CD8-positive, alpha-beta memory T cell (primary cell): ENCODE measurements at regions of chr2 and their contacts with region 1.

Region 1: DNA sequence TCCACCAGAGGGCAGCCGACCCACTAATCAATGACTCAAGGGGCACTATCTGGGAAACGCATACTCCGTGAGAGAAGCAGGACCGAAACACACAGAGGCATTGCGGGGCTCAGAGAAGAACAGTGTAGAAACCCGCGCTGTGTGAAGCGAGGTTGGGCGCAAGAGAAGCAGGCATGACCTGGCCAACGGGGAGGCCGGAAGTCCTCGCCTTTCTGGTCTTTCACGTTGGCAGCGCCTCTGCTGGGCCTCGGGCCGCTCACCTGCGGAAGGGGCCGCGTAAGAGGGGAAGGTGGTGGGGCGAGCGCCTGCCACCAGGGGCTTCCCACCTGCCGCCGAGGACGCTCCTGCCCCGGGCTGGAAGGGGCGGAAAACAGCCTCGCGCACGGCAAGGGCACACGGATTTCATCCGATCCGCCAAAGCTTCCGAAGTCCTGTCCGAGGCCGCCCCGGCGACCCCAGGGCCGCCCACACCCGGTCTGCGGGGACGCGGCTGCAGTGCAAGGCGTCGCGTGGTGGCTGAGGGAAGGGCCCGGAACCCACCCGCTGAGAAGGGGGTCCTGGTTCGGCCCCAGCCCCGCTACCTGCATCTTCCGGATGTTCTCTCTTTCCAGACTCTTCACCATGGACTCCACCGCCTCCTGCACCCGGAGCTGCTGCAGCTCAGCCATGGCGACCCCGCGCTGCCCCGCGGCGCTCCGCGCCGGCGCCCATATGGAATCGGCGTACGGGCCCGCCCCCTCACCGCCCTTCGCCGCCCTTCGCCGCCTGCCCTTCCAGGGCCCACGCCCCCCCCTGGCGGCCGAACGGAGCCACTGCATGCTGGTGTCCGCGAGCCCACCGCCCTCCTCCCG is at the start of gene FAM136A:
- DNase-seq: peak; percentile 84 to 91 (median 86)
- H3K4me3 ChIP-seq: peak within 1 kb of the TSS; percentile 85
- H3K4me3 Mint-ChIP-seq: peak within 1 kb of the TSS; percentile 89 to 96 (median 92)
- H3K27ac ChIP-seq: peak within 1 kb of the TSS; percentile 79
- H3K27ac Mint-ChIP-seq: peak within 1 kb of the TSS; percentile 73 to 96 (median 88)
- H3K4me1 ChIP-seq: peaks cover 19% of the 10 kb centered on the region
- H3K4me1 Mint-ChIP-seq: peaks cover 27 to 44% (median 34%) of the 10 kb centered on the region in 3 donors
- H3K27me3 ChIP-seq: no peaks in the 10 kb centered on the region
- H3K27me3 Mint-ChIP-seq: no peaks in the 10 kb centered on the region
- total RNA-seq, gene FAM136A: 99.4 to 102 TPM

Region 2: GRCh38 chr2:70312560-70312959 is 11.0 kb after region 1 on chr2:
- CTCF ChIA-PET with region 1: interaction called, 28 read pairs
- POLR2A ChIA-PET with region 1: no interaction called
- DNase-seq: no peak
- H3K4me3 ChIP-seq: no peak overlapping the region
- H3K4me3 Mint-ChIP-seq: no peak overlapping the region
- H3K27ac ChIP-seq: no peak overlapping the region
- H3K27ac Mint-ChIP-seq: no peak overlapping the region
- H3K4me1 ChIP-seq: no peaks in the 10 kb centered on the region
- H3K4me1 Mint-ChIP-seq: no peaks in the 10 kb centered on the region
- H3K27me3 ChIP-seq: no peaks in the 10 kb centered on the region
- H3K27me3 Mint-ChIP-seq: peaks cover 10 to 25% of the 10 kb centered on the region in 2 donors

Region 3: DNA sequence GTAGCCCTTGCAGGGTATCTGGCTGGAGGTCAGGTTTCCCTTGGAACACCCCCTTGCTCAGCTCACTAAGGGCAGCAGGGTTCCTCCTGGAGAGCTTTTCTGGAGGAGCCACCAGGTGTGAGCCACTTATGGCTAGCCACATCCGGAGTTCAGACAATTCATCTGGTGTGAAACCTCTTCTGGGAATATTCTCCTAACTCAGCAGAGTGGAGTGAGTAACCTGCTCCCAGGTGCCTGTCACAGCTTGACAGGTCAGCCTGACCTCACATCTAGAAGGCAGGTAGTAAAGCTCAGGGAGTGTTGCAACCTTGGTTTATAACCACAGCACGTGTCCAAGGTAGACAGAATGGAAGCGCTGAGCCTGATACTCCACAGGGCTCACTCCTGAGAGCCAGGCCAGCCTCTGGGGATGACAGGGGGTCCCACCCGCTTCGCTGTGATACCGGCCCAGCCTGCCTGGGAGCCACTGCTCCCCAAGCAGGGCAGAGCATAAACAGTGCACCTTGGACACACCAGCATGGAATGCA is 314.7 kb after region 1 on chr2:
- CTCF ChIA-PET with region 1: interaction called, 70 read pairs
- POLR2A ChIA-PET with region 1: no interaction called
- DNase-seq: no peak
- H3K4me3 ChIP-seq: no peak overlapping the region
- H3K4me3 Mint-ChIP-seq: no peak overlapping the region
- H3K27ac ChIP-seq: no peak overlapping the region
- H3K27ac Mint-ChIP-seq: no peak overlapping the region
- H3K4me1 ChIP-seq: no peaks in the 10 kb centered on the region
- H3K4me1 Mint-ChIP-seq: no peaks in the 10 kb centered on the region
- H3K27me3 ChIP-seq: no peaks in the 10 kb centered on the region
- H3K27me3 Mint-ChIP-seq: peaks cover 2 to 13% of the 10 kb centered on the region in 2 donors

Region 4: GRCh38 chr2:70643715-70644114 is 342.1 kb after region 1 on chr2:
- CTCF ChIA-PET with region 1: interaction called, 19 read pairs
- POLR2A ChIA-PET with region 1: interaction called, 3 read pairs
- DNase-seq: no peak
- H3K4me3 ChIP-seq: no peak overlapping the region
- H3K4me3 Mint-ChIP-seq: no peak overlapping the region
- H3K27ac ChIP-seq: no peak overlapping the region
- H3K27ac Mint-ChIP-seq: no peak overlapping the region
- H3K4me1 ChIP-seq: peaks cover 17% of the 10 kb centered on the region
- H3K4me1 Mint-ChIP-seq: peaks cover 3 to 21% (median 13%) of the 10 kb centered on the region in 3 donors
- H3K27me3 ChIP-seq: no peaks in the 10 kb centered on the region
- H3K27me3 Mint-ChIP-seq: peaks cover 2 to 7% of the 10 kb centered on the region in 2 donors